Left colon (tissue), 2 donors: ENCODE measurements at regions of chr6 and their contacts with region 1.

Region 1: DNA sequence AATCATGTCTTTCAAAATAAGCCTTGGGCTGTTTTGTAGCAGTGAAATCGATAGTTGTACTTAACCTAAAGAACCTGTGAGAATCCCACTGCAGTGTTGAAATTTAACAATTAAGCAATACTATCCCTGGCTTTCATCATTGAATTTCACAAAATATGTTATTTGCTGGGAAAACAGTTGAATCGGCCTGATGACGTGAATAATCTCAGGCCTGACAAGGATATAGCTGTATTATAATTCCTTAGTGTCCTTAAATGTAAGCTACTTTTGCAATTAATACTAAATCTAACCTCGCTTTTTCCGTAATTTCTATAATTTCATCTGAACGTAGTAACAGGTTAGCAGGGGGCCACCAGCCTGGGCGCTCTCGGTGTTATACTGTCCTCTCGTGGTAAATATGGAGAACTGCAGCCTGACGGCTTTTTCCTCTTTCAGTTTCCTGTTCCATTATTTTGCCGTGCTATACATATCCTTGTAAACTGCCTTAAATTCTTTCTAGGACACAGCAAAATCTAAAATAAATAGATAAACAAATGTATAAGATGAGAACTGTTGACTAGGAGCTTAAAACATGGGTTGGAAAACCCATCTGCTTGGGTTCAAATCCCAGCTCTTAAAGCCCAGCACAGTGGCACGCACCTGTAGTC is 24.0 kb downstream of the MTFR2 start:
- DNase-seq: peak in 1 of 2 donors; percentile 61
- ATAC-seq: peak; percentile 83

Region 2: GRCh38 chr6:135535989-135536414 is 690.1 kb before region 1 on chr6:
- intact Hi-C with region 1: loop called in 1 of 2 experiments (anchors 2 kb)
- DNase-seq: no peak
- ATAC-seq: peak; percentile 37

Region 3: DNA sequence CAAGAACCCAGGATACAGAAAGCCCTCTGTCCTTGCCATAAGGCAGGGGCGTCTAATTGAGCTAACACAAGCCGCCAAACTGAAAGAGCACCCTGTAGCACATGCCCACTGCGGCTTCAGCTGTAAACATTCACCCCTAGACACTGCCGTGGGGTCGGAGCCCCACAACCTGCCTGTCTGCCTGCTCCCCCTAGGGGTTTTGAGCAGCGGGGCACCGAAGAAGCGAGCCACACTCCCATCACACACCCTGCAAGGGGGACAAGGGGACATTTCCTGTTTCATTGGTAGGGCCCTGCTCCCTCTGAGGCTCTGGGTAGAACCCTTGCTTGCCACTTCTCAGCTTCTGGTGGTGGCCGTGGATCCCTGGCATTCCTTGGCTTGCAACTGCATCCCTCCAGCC is 108.7 kb after region 1 on chr6:
- intact Hi-C with region 1: no loop called
- DNase-seq: no peak
- ATAC-seq: no peak